GM12878 (cell line): ENCODE measurements at regions of chr5 and their contacts with region 1.

Region 1: GRCh38 chr5:113378959-113379541 is 55.7 kb downstream of the TSSK1B start:
- DNase-seq: peak; percentile 9
- ATAC-seq: peak; percentile 84
- H3K4me3 ChIP-seq: no peak overlapping the region
- H3K27ac ChIP-seq: no peak overlapping the region
- H3K4me1 ChIP-seq: no peaks in the 10 kb centered on the region
- H3K27me3 ChIP-seq: no peaks in the 10 kb centered on the region
- CTCF ChIP-seq: peak; percentile 67 to 80 (median 77)
- EP300 ChIP-seq: no peak
- POLR2A ChIP-seq: no peak
- RAD21 ChIP-seq: peak; percentile 76

Region 2: DNA sequence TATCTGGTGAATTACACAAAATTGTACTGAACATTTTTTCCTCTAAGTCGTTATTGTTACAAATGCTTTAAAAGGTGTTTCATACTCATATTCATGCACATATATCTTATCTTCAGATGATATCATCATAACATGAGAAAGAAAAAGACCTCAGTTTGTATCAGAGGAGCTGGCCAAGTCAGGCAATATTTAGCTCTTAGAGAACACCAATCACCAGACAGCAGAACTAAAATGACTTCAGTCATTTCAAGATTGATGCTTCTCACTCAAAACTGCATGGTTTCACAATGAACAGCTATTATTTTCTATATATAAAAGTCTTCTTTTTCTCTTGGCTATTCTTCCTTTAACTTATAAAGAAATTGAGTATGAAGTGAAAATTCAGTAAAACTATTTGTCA is 11.2 kb after region 1 on chr5:
- CTCF ChIA-PET with region 1: interaction called, 11 read pairs
- POLR2A ChIA-PET with region 1: interaction called, 3 read pairs
- RAD21 ChIA-PET with region 1: no interaction called
- SMC1A ChIA-PET with region 1: interaction called, 5 read pairs
- in situ Hi-C with region 1: no loop called
- intact Hi-C with region 1: no loop called
- DNase-seq: no peak
- ATAC-seq: no peak
- H3K4me3 ChIP-seq: no peak overlapping the region
- H3K27ac ChIP-seq: no peak overlapping the region
- H3K4me1 ChIP-seq: no peaks in the 10 kb centered on the region
- H3K27me3 ChIP-seq: no peaks in the 10 kb centered on the region; a peak in 1 of 4 replicates
- CTCF ChIP-seq: no peak
- EP300 ChIP-seq: no peak
- POLR2A ChIP-seq: no peak
- RAD21 ChIP-seq: no peak

Region 3: GRCh38 chr5:113606298-113607134 is 227.5 kb after region 1 on chr5:
- CTCF ChIA-PET with region 1: interaction called, 57 read pairs
- POLR2A ChIA-PET with region 1: no interaction called
- RAD21 ChIA-PET with region 1: interaction called, 23 read pairs
- SMC1A ChIA-PET with region 1: interaction called, 13 read pairs
- in situ Hi-C with region 1: loop called (anchors 5 kb)
- intact Hi-C with region 1: loop called (anchors 1 kb)
- DNase-seq: peak; percentile 7
- ATAC-seq: peak; percentile 98
- H3K4me3 ChIP-seq: no peak overlapping the region
- H3K27ac ChIP-seq: no peak overlapping the region
- H3K4me1 ChIP-seq: no peaks in the 10 kb centered on the region
- H3K27me3 ChIP-seq: no peaks in the 10 kb centered on the region
- CTCF ChIP-seq: peak; percentile 63 to 82 (median 73)
- EP300 ChIP-seq: no peak
- POLR2A ChIP-seq: no peak
- RAD21 ChIP-seq: peak; percentile 96